Left cardiac atrium (tissue), 4 donors: ENCODE measurements at regions of chr6 and their contacts with region 1.

Region 1: GRCh38 chr6:37679539-37680476 is 17.9 kb downstream of the MDGA1 start:
- DNase-seq: peak; percentile 48
- ATAC-seq: peak; percentile 34 to 62

Region 2: DNA sequence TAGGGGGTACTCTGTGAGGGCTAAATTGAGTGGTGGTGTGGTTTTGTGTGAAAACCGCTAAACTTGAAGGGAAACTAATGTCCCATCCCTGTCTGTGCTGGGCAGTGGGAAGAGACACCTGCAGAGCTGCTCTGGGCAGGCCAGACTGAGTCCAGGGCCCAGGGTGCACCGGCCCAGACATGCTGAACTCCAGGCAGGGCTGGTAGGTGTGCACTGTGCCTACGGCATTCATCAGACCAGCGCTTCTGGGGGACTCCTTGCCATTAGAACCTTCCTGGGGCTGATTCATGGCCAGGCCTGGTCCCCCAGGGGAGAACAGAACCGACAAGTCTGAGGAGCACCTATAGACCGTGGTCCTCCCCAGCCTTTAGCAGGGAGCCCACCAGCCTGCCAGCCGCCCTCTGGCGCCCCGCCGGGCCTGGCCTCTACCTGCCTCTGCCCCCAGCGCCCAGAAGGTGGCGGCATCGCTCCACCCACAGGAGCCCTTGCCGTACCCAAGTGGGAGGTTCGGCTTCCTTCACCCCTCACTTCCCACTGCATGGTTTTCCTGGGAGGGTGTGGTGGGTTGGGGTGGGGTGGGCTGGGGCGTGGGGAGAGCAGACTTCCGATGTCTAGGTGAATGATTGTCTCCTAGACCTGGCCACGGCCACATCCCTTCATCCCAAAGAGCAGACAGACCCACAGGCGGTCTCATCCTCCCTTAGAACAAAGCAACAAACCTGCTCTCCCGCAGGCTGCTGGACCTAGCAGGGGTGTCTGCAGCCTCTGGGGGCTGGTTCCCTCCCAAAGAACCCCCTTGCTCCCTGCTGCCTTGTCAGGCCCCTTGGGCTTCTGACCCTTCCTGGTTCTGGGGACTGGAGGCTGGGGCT is 195.7 kb before region 1 on chr6:
- intact Hi-C with region 1: loop called in 1 of 2 experiments (anchors 10 kb)
- DNase-seq: peak; percentile 61
- ATAC-seq: peak; percentile 64 to 72

Region 3: GRCh38 chr6:37990762-37991525 is 311.1 kb after region 1 on chr6:
- intact Hi-C with region 1: no loop called
- DNase-seq: no peak
- ATAC-seq: peak in 1 of 2 donors; percentile 71